Natural killer cell (primary cell): ENCODE measurements at regions of chr9 and their contacts with region 1.

Region 1: DNA sequence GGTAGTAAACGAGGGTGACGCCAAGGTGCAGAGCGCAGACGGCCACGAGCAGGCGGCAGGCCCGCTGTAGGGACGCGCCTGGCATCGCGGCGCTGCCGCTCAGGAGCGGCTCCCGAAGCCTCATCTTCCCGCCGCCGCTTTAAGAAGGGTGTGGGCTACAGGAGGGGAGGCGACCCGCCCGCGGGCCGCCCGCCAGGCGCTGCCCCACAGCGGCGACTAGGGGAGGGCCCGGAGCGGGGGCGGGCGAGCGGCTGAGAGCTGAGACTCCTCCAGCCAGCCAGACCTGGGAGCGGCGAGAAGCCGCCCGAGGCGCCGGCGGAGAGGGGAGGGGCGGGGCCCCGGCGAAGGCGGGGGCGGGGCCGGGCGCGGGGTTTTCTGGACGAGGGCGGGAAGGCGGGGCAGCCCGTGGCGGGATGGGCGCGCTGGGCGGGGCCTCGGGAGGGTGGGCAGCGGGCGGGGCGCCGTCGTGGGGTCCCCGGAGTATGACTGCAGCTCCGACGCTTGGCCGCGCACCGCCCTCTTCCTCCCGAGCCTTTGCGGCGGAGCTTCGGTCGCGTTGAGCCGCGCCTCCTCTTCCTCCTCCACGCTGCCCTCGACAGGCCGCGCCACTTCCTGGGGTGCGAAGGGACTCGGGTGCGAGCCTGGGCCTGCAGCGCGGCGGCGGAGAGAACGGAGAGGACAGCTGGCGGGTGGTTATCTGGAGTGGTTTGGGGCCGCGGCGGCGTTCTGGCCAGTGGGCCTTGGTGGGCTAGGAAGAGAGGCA is at the start of gene B4GALT1:
- DNase-seq: peak; percentile 89 to 97
- ATAC-seq: peak; percentile 65 to 88 (median 76)
- H3K4me3 ChIP-seq: peak within 1 kb of the TSS; percentile 99
- H3K4me3 Mint-ChIP-seq: peak within 1 kb of the TSS; percentile 94
- H3K27ac ChIP-seq: peak within 1 kb of the TSS; percentile 96
- H3K27ac Mint-ChIP-seq: peak within 1 kb of the TSS; percentile 99
- H3K4me1 ChIP-seq: peaks cover 56% of the 10 kb centered on the region
- H3K4me1 Mint-ChIP-seq: peaks cover 67 to 68% of the 10 kb centered on the region in 2 donors
- H3K27me3 ChIP-seq: no peaks in the 10 kb centered on the region
- H3K27me3 Mint-ChIP-seq: no peaks in the 10 kb centered on the region
- CTCF ChIP-seq: no peak
- total RNA-seq, gene B4GALT1: 122 to 143 (median 128) TPM

Region 2: DNA sequence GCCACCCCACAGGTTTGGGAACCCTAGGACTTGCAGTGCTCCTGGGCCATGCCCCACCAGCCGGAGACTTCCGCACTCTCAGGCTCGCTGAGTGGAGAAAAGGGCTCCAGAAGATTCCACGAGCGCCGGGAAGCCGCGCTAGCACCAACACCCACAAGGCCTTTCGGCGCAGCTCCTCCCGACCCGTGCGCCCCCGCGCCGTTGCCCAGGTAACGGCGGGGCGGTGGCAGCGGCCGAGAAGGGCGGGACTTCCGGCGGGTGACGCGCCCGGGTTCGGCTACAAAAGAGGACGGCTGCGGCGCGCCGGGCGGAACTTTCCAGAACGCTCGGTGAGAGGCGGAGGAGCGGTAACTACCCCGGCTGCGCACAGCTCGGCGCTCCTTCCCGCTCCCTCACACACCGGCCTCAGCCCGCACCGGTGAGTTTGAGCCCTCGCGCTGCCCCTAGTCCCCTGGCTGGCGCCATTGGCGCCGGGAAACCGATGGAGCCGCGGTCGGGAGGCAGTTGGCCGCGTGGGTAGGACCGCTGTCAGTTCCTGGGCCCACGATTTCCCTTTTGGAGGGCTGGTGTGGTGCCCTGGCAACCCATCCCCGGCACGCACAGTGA is 142.2 kb before region 1 on chr9 and contains the start of gene DNAJA1:
- intact Hi-C with region 1: loop called (anchors 5 kb)
- DNase-seq: peak; percentile 97
- ATAC-seq: peak; percentile 79 to 92 (median 82)
- H3K4me3 ChIP-seq: peak within 1 kb of the TSS; percentile 96
- H3K4me3 Mint-ChIP-seq: peak within 1 kb of the TSS; percentile 92
- H3K27ac ChIP-seq: peak within 1 kb of the TSS; percentile 97
- H3K27ac Mint-ChIP-seq: peak within 1 kb of the TSS; percentile 98 to 99
- H3K4me1 ChIP-seq: peaks cover 26% of the 10 kb centered on the region
- H3K4me1 Mint-ChIP-seq: peaks cover 54 to 57% of the 10 kb centered on the region in 2 donors
- H3K27me3 ChIP-seq: no peaks in the 10 kb centered on the region
- H3K27me3 Mint-ChIP-seq: no peaks in the 10 kb centered on the region
- CTCF ChIP-seq: no peak
- total RNA-seq, gene DNAJA1: 150 to 244 (median 192) TPM

Region 3: DNA sequence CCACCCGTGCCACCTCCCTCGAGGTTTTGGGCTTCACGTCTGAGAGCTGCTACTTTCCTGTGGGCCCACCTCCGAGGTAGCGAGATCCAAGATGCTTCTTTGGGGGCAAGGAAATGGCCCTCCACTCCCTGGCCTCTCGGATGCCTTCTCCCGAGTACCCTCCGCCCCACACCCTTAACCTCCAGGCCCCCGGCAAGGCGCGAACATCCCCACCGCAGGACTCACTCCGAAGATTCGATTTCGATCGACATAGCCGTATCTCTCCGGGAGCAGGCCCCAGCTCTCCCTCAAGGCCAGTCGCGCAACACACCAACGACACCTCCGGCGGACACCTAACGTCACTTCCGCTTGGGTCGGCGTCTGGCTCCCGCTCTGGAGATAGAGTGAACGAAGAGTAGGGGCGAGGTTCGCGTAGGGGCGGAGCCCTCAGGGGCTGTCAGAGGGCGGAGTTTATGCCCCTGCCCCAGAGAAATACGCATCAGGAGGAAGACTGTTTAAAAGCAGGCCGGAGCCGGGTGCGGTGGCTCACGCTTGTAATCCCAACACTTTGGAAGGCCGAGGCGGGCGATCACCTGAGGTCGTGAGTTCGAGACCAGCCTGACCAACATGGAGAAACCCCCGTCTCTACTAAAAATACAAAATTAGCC is 90.7 kb before region 1 on chr9 and contains the start of gene SMU1:
- intact Hi-C with region 1: loop called (anchors 1 kb)
- DNase-seq: peak; percentile 90 to 98
- ATAC-seq: peak; percentile 94 to 99 (median 95)
- H3K4me3 ChIP-seq: peak within 1 kb of the TSS; percentile 53
- H3K4me3 Mint-ChIP-seq: peak within 1 kb of the TSS; percentile 96
- H3K27ac ChIP-seq: peak within 1 kb of the TSS; percentile 88
- H3K27ac Mint-ChIP-seq: peak within 1 kb of the TSS; percentile 93 to 99
- H3K4me1 ChIP-seq: peaks cover 17% of the 10 kb centered on the region
- H3K4me1 Mint-ChIP-seq: peaks cover 22 to 23% of the 10 kb centered on the region in 2 donors
- H3K27me3 ChIP-seq: no peaks in the 10 kb centered on the region
- H3K27me3 Mint-ChIP-seq: no peaks in the 10 kb centered on the region
- CTCF ChIP-seq: no peak
- total RNA-seq, gene SMU1: 21.9 to 23.2 (median 22.1) TPM

Region 4: GRCh38 chr9:33116860-33117259 is 50.4 kb before region 1 on chr9:
- intact Hi-C with region 1: loop called (anchors 10 kb)
- DNase-seq: no peak
- ATAC-seq: no peak
- H3K4me3 ChIP-seq: no peak overlapping the region
- H3K4me3 Mint-ChIP-seq: no peak overlapping the region
- H3K27ac ChIP-seq: peak overlapping the region; percentile 12
- H3K27ac Mint-ChIP-seq: peak overlapping the region; percentile 68 to 77
- H3K4me1 ChIP-seq: peaks cover 41% of the 10 kb centered on the region
- H3K4me1 Mint-ChIP-seq: peaks cover 38 to 57% of the 10 kb centered on the region in 2 donors
- H3K27me3 ChIP-seq: no peaks in the 10 kb centered on the region
- H3K27me3 Mint-ChIP-seq: peaks cover 0 to 2% of the 10 kb centered on the region in 2 donors
- CTCF ChIP-seq: no peak

Region 5: DNA sequence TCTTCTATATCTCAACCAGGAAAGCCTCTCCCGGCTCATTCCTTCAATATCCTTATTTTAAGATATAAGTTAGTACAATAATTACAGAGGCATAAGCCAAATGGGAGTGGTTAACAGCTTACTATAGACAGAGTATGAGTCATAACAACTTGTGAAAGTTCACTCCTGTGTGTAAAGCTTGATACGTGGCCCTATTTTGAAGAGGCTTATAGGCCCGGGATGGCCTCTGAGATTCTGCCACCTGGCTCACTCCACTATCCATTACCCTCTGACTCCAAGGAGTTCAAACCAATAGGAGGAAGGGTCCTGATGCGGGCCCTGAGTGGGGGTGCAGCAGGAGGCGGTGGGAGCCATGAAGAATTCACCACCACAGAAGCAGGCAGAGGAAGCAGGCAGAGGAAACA is 36.7 kb before region 1 on chr9:
- intact Hi-C with region 1: loop called (anchors 1 kb)
- DNase-seq: peak; percentile 49 to 53
- ATAC-seq: peak; percentile 83 to 93 (median 86)
- H3K4me3 ChIP-seq: no peak overlapping the region
- H3K4me3 Mint-ChIP-seq: peak overlapping the region; percentile 88
- H3K27ac ChIP-seq: peak overlapping the region; percentile 82
- H3K27ac Mint-ChIP-seq: peak overlapping the region; percentile 97 to 98
- H3K4me1 ChIP-seq: peaks cover 75% of the 10 kb centered on the region
- H3K4me1 Mint-ChIP-seq: peaks cover 75 to 87% of the 10 kb centered on the region in 2 donors
- H3K27me3 ChIP-seq: no peaks in the 10 kb centered on the region
- H3K27me3 Mint-ChIP-seq: no peaks in the 10 kb centered on the region
- CTCF ChIP-seq: no peak

Region 6: GRCh38 chr9:33225319-33226149 is 58.3 kb after region 1 on chr9:
- intact Hi-C with region 1: loop called (anchors 2 kb)
- DNase-seq: peak; percentile 49 to 88
- ATAC-seq: peak; percentile 71 to 88 (median 77)
- H3K4me3 ChIP-seq: no peak overlapping the region
- H3K4me3 Mint-ChIP-seq: no peak overlapping the region
- H3K27ac ChIP-seq: no peak overlapping the region
- H3K27ac Mint-ChIP-seq: peak overlapping the region in 1 of 2 donors; percentile 40
- H3K4me1 ChIP-seq: peaks cover 19% of the 10 kb centered on the region
- H3K4me1 Mint-ChIP-seq: peaks cover 9 to 19% of the 10 kb centered on the region in 2 donors
- H3K27me3 ChIP-seq: no peaks in the 10 kb centered on the region
- H3K27me3 Mint-ChIP-seq: no peaks in the 10 kb centered on the region
- CTCF ChIP-seq: peak; percentile 90

Region 7: GRCh38 chr9:33264473-33265177 is 97.4 kb after region 1 on chr9 and contains the starts of genes BAG1 and CHMP5:
- intact Hi-C with region 1: loop called (anchors 1 kb)
- DNase-seq: peak; percentile 97 to 99
- ATAC-seq: peak; percentile 91 to 99 (median 93)
- H3K4me3 ChIP-seq: peak within 1 kb of the TSS; percentile 96
- H3K4me3 Mint-ChIP-seq: peak within 1 kb of the TSS; percentile 84
- H3K27ac ChIP-seq: peak within 1 kb of the TSS; percentile 91
- H3K27ac Mint-ChIP-seq: peak within 1 kb of the TSS; percentile 93 to 95
- H3K4me1 ChIP-seq: peaks cover 22% of the 10 kb centered on the region
- H3K4me1 Mint-ChIP-seq: peaks cover 40 to 41% of the 10 kb centered on the region in 2 donors
- H3K27me3 ChIP-seq: no peaks in the 10 kb centered on the region
- H3K27me3 Mint-ChIP-seq: no peaks in the 10 kb centered on the region
- CTCF ChIP-seq: no peak
- total RNA-seq, gene BAG1: 83.4 to 102 (median 93.4) TPM
- total RNA-seq, gene CHMP5: 21.3 to 24.5 (median 24.0) TPM

Region 8: GRCh38 chr9:33290247-33291030 is 123.2 kb after region 1 on chr9 and contains the start of gene NFX1:
- intact Hi-C with region 1: no loop called
- DNase-seq: peak; percentile 98 to 100
- ATAC-seq: peak; percentile 73 to 94 (median 89)
- H3K4me3 ChIP-seq: peak within 1 kb of the TSS; percentile 82
- H3K4me3 Mint-ChIP-seq: peak within 1 kb of the TSS; percentile 99
- H3K27ac ChIP-seq: peak within 1 kb of the TSS; percentile 98
- H3K27ac Mint-ChIP-seq: peak within 1 kb of the TSS; percentile 100
- H3K4me1 ChIP-seq: peaks cover 34% of the 10 kb centered on the region
- H3K4me1 Mint-ChIP-seq: peaks cover 41 to 42% of the 10 kb centered on the region in 2 donors
- H3K27me3 ChIP-seq: no peaks in the 10 kb centered on the region
- H3K27me3 Mint-ChIP-seq: peaks cover 0 to 3% of the 10 kb centered on the region in 2 donors
- CTCF ChIP-seq: no peak
- total RNA-seq, gene NFX1: 33.0 to 38.8 (median 38.5) TPM